CD8-positive, alpha-beta T cell (primary cell): ENCODE measurements at regions of chr13 and their contacts with region 1.

Region 1: DNA sequence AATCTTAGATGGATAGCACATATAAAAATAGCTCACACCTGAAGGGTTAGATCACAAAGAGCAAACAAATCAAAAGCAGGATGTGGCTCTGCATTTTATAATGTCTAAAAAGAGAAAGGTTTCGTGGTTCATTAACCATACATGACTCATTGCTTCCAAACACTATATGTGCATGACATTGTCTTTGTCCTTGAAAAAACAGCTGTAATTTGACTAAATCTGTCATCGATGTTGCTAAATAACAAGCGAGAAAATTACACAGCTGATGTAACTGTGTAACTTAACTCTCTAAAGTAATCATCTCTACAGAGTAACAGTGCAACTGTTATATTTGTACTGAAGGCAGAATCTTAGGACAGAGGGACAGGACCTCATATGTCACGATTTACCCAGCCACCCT is 383.1 kb upstream of the GPC6 start:
- DNase-seq: no peak
- ATAC-seq: no peak
- H3K4me3 ChIP-seq: no peak overlapping the region
- H3K4me3 Mint-ChIP-seq: no peak overlapping the region
- H3K27ac ChIP-seq: no peak overlapping the region
- H3K27ac Mint-ChIP-seq: no peak overlapping the region
- H3K4me1 ChIP-seq: no peaks in the 10 kb centered on the region
- H3K4me1 Mint-ChIP-seq: no peaks in the 10 kb centered on the region
- H3K27me3 ChIP-seq: no peaks in the 10 kb centered on the region
- H3K27me3 Mint-ChIP-seq: no peaks in the 10 kb centered on the region
- CTCF ChIP-seq: no peak

Region 2: GRCh38 chr13:91632091-91632490 is 1211.5 kb before region 1 on chr13:
- CTCF ChIA-PET with region 1: no interaction called
- POLR2A ChIA-PET with region 1: no interaction called
- intact Hi-C with region 1: no loop called
- DNase-seq: no peak
- ATAC-seq: no peak
- H3K4me3 ChIP-seq: no peak overlapping the region
- H3K4me3 Mint-ChIP-seq: no peak overlapping the region
- H3K27ac ChIP-seq: no peak overlapping the region
- H3K27ac Mint-ChIP-seq: no peak overlapping the region
- H3K4me1 ChIP-seq: no peaks in the 10 kb centered on the region
- H3K4me1 Mint-ChIP-seq: no peaks in the 10 kb centered on the region
- H3K27me3 ChIP-seq: no peaks in the 10 kb centered on the region
- H3K27me3 Mint-ChIP-seq: no peaks in the 10 kb centered on the region
- CTCF ChIP-seq: no peak

Region 3: DNA sequence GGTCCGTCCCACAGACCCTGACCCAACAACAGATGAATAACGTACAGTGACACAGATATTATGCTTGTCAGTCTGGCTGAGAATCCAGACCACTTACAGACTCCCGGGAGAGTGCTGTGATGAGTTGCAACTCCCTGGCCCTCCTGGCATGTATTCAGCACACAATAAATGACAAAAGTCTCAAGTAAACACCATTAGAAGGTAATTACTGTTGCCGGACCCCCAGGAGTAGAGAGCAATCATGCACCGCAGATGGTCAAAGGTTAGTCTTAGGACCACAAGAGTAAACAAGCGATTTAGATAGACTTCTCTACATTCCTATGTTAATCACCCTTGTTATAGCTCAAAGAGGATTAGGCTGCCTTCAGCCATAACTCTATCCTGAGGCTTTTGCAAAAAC is 343.4 kb before region 1 on chr13:
- CTCF ChIA-PET with region 1: no interaction called
- POLR2A ChIA-PET with region 1: no interaction called
- intact Hi-C with region 1: no loop called
- DNase-seq: no peak
- ATAC-seq: no peak
- H3K4me3 ChIP-seq: no peak overlapping the region
- H3K4me3 Mint-ChIP-seq: no peak overlapping the region
- H3K27ac ChIP-seq: no peak overlapping the region
- H3K27ac Mint-ChIP-seq: no peak overlapping the region
- H3K4me1 ChIP-seq: no peaks in the 10 kb centered on the region
- H3K4me1 Mint-ChIP-seq: no peaks in the 10 kb centered on the region
- H3K27me3 ChIP-seq: no peaks in the 10 kb centered on the region
- H3K27me3 Mint-ChIP-seq: no peaks in the 10 kb centered on the region
- CTCF ChIP-seq: no peak

Region 4: DNA sequence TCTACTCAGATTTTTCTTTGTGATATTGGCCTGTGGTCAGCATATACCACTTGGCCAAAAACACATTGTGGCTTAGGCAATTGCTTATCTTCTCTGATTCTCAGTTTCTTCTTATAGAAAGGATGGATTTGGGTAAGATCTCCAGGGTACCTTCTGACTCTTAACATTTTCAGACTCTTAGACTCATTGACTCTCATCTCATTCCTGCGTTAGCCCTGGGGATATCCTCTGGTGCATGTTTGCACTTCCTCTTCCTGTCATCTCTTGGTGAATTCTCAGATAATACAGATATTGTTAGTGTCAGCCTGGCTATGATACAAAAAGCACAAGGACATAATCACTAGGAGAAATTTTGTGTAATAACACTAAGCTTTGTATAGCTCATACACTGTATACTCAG is 109.5 kb before region 1 on chr13:
- CTCF ChIA-PET with region 1: no interaction called
- POLR2A ChIA-PET with region 1: no interaction called
- intact Hi-C with region 1: loop called in 1 of 2 experiments (anchors 5 kb)
- DNase-seq: no peak
- ATAC-seq: no peak
- H3K4me3 ChIP-seq: no peak overlapping the region
- H3K4me3 Mint-ChIP-seq: no peak overlapping the region
- H3K27ac ChIP-seq: no peak overlapping the region
- H3K27ac Mint-ChIP-seq: no peak overlapping the region
- H3K4me1 ChIP-seq: no peaks in the 10 kb centered on the region
- H3K4me1 Mint-ChIP-seq: no peaks in the 10 kb centered on the region
- H3K27me3 ChIP-seq: no peaks in the 10 kb centered on the region
- H3K27me3 Mint-ChIP-seq: no peaks in the 10 kb centered on the region
- CTCF ChIP-seq: no peak

Region 5: DNA sequence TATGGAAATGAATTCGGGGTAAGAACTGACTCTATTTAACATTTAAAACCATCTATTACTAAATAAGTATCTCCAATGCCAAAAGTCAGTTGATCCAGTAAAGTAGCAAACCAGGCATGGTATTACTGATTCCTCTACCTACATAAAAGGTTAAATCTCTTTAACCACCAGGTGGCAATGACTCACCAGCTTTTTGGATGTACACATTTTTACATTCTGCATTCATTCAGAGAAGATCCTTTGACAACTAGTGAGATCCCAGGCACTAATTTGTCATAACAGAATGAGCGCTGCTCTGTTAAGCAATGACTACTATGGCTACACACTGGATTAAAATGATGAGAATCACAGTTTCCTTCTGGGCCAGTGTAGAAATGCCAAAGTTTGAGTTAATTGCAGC is 53.3 kb after region 1 on chr13:
- CTCF ChIA-PET with region 1: no interaction called
- POLR2A ChIA-PET with region 1: no interaction called
- intact Hi-C with region 1: no loop called
- DNase-seq: no peak
- ATAC-seq: no peak
- H3K4me3 ChIP-seq: no peak overlapping the region
- H3K4me3 Mint-ChIP-seq: no peak overlapping the region
- H3K27ac ChIP-seq: no peak overlapping the region
- H3K27ac Mint-ChIP-seq: no peak overlapping the region
- H3K4me1 ChIP-seq: no peaks in the 10 kb centered on the region
- H3K4me1 Mint-ChIP-seq: no peaks in the 10 kb centered on the region
- H3K27me3 ChIP-seq: no peaks in the 10 kb centered on the region
- H3K27me3 Mint-ChIP-seq: no peaks in the 10 kb centered on the region
- CTCF ChIP-seq: no peak